ENCODE measurements at regions of chr6 and their contacts with region 1.

Region 1: GRCh38 chr6:53786832-53787231 is 8.0 kb upstream of the LRRC1 start:
- DNase-seq: no peak
- H3K4me3 ChIP-seq: no peak overlapping the region
- CTCF ChIP-seq: no peak
- POLR2A ChIP-seq: no peak

Region 2: GRCh38 chr6:52517502-52518278 is 1269.1 kb before region 1 on chr6:
- intact Hi-C with region 1: no loop called
- DNase-seq: peak; percentile 90 to 95
- H3K4me3 ChIP-seq: no peak overlapping the region
- CTCF ChIP-seq: no peak
- POLR2A ChIP-seq: no peak

Region 3: DNA sequence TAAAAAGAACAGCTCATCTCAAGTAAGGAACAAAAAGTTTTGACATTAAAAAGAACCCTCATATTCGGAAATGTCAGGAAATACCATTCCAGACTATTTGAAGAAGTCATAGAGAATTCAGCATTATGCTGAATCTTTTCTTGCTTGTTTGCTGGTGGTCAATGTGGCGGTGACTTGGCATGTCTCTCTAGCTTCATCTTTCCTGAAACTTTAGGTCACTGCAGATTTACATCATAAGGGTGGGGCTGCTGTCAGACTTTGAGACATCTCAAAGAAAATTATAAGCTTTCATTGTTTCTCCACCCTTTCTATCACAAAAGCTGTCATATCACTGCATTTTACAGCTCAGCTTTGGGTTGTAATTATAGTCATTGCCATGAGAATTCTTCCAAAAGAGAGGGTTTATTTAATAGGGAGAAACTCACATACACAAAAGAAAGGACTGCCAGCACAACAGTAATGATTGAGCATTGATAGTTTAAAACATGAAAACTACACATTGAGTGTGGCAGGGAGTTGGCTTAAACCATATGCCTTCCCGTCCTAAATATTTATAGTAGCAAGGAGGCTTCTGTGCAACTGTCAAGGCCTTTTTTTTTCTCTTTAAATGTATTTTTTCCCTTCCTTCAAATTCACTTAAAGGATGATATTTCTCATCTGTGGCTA is 36.7 kb before region 1 on chr6:
- intact Hi-C with region 1: loop called (anchors 1 kb)
- DNase-seq: no peak
- H3K4me3 ChIP-seq: no peak overlapping the region
- CTCF ChIP-seq: no peak
- POLR2A ChIP-seq: no peak

Region 4: GRCh38 chr6:55410674-55411073 is 1623.8 kb after region 1 on chr6:
- intact Hi-C with region 1: loop called (anchors 5 kb)
- DNase-seq: no peak
- H3K4me3 ChIP-seq: no peak overlapping the region
- CTCF ChIP-seq: no peak
- POLR2A ChIP-seq: no peak

Measured in lower leg skin (tissue), 4 donors.